ENCODE measurements at regions of chr1 and their contacts with region 1.

Region 1: DNA sequence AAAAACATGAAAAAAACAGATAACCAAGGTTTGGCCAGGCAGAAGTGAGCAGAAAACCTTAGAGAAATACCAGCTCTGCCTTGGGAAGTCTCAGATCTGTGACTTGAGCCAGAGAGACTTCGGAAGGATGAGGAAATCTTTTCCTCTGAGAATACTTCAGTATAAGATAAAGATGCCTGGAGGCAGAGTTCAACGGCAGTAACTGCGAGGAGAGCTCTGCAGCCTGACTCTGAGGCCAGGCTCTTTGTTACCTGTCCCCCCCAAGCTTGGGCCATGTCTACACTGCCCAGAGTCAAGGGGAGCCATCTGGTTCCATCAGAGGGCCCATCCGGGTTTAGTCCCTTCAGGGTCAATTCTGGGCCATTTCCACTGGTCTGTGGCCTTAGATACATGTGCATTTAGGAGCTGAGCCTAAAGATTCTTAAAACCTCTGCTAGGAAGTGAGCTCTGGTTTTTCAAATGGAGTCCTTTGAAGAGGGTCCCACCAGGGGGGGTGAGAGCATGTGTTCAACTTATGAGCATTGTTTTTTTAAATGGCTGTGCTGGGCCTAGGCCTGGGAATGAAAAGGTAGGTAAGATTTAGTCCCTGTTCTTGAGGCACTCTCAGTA is 8.7 kb downstream of the KIRREL1 start:
- DNase-seq: no peak
- ATAC-seq: peak; percentile 43
- H3K4me3 ChIP-seq: peak overlapping the region in 1 of 2 experiments; percentile 14; a peak in 1 of 4 replicates
- H3K27ac ChIP-seq: peak overlapping the region; percentile 100
- H3K4me1 ChIP-seq: peaks cover 100% of the 10 kb centered on the region
- H3K27me3 ChIP-seq: no peaks in the 10 kb centered on the region
- CTCF ChIP-seq: no peak

Region 2: DNA sequence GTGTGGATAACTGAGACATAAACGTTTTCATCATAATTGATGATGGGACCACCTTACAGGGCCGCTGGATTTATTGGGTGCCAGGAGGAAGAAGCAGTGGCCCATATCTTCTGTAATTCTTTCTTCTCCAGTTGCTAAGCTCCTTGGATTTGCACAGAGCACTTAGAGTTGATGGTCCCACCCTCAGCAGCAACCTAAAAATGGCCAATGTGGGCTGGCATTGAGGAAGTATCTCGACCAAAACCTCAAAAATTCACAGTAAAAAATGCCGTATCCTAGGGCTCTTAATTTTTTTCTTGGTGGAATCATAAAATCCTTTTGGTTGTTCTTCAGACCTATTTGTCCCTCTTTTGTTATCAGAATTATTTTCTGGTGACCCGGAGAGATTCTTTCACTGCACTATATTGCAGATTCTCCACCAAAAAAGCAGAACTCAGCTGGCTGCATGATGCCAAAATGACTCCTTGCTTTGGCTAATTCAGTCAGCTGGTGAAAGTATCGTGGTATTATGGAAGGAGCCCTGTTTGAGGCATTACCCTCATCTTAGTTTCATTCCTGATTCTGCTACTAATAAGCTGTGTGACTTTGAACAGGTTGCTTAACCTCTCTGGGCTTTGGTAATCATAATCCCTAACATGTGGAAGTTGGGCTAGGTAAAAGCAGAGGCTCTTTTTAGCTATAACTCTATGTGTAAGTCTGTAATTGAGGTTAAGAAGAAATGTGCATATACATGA is 18.9 kb after region 1 on chr1:
- CTCF ChIA-PET with region 1: interaction called, 11 read pairs
- POLR2A ChIA-PET with region 1: interaction called, 3 read pairs
- in situ Hi-C with region 1: no loop called
- intact Hi-C with region 1: no loop called
- DNase-seq: no peak
- ATAC-seq: no peak
- H3K4me3 ChIP-seq: no peak overlapping the region
- H3K27ac ChIP-seq: peak overlapping the region; percentile 98
- H3K4me1 ChIP-seq: peaks cover 94% of the 10 kb centered on the region
- H3K27me3 ChIP-seq: no peaks in the 10 kb centered on the region
- CTCF ChIP-seq: no peak